Right ventricle myocardium inferior (tissue), 1 donor: ENCODE measurements at regions of chrX and their contacts with region 1.

Region 1: GRCh38 chrX:69991685-69992084 is 58.1 kb downstream of the AWAT2 start:
- DNase-seq: peak; percentile 41
- ATAC-seq: peak; percentile 51

Region 2: DNA sequence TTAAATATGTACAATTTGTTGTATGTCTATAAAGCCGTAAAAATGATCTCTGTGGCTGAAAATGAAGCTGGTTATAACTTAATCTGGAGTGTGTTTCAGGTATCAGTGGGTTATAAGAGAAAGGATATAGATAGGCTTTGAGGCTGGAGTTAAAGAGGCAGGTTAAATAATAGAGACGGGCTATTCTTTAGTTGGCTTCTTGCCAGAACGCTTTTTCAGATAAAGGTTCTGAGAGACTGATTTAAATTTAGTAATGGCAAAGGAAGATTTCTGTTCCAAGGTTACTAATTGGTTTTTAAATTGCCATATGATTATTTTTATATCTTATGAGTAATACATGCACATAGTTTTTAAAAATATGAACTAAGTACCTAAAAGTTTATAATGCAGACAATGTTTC is 59.4 kb before region 1 on chrX:
- intact Hi-C with region 1: loop called (anchors 10 kb)
- DNase-seq: no peak
- ATAC-seq: no peak